Ascending aorta (tissue), 2 donors: ENCODE measurements at regions of chr13 and their contacts with region 1.

Region 1: DNA sequence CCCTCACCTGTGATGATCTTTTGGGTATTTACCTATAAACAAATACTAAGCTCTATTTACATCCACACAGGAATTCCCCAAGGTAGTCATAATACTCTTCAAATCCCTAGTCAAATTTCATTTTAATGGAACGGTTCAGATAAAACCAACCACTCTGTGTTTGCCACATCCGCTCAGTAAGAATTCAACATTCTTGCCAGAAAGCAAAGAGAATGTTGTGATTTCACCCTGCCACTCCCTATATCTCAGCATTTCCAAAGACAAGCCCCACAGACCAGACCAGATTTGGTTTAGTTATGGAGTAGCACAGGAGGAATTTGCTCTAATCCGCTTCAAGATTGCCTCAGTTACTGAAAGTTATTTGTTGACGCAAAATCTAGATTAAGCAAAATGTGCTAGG is 105.7 kb upstream of the SERP2 start:
- DNase-seq: no peak
- H3K4me3 ChIP-seq: no peak overlapping the region
- H3K27ac ChIP-seq: peak overlapping the region; percentile 88 to 92
- H3K4me1 ChIP-seq: peaks cover 9 to 42% of the 10 kb centered on the region in 2 donors
- H3K27me3 ChIP-seq: no peaks in the 10 kb centered on the region
- CTCF ChIP-seq: no peak

Region 2: DNA sequence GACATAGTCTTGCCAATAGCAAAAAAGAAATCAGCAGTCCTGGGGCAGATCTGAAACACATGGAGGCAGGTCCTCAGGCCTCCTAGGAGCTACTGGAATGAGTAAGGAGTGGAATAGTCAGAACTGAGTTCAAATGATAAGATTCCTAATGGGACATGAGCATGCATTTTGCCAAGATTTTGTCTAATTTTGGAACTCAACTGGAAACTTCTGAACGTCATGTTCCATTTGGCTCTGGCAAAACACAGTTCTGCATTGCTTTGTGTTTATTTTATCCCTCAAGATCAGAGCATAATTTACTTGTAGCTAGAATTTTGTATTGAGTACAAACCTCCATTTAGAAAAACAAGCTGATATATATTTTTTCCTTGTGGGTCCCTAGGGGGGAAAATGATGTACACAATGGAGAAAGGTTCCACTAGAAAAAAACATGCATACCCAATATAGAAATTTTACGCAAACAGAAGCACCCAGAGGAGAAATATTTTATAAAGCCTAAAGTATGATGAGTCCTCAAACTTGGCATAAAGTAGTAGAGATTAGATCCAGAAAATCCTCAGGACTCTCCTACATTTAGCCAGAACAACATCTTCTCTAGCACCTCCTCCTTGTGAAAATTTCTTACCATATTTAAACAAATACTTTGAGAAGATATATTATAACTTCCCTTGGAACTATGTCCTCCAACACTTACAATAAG is 43.4 kb before region 1 on chr13:
- intact Hi-C with region 1: loop called (anchors 1 kb)
- DNase-seq: peak in 1 of 2 donors; percentile 87
- H3K4me3 ChIP-seq: no peak overlapping the region
- H3K27ac ChIP-seq: peak overlapping the region; percentile 85 to 93
- H3K4me1 ChIP-seq: peaks cover 9 to 38% of the 10 kb centered on the region in 2 donors
- H3K27me3 ChIP-seq: no peaks in the 10 kb centered on the region
- CTCF ChIP-seq: no peak

Region 3: DNA sequence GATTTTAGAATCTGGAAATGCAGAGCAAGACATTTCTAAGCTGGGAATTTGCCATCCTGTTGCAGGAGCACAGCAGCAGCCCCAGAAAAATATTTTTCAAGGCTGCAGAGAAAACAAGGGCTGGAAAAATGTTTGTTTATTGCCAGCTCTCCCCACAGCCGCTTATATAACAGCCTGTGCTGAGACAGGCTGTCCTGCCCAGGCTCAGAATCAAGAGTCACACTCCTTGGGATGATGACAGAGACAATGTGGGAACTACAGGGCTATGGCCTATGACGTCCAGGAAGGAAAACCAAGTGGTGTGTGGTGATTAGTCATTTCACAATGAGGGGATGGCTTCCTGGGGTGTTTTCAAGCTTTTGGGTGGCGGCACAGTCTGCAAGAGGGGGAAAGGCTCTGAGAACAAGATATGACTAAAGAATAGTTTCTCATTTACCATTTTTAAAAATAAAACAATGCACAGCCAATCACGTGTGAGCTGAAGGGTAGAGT is 30.6 kb before region 1 on chr13:
- intact Hi-C with region 1: loop called (anchors 2 kb)
- DNase-seq: peak; percentile 64 to 92
- H3K4me3 ChIP-seq: no peak overlapping the region
- H3K27ac ChIP-seq: peak overlapping the region; percentile 86 to 92
- H3K4me1 ChIP-seq: peaks cover 9 to 19% of the 10 kb centered on the region in 2 donors
- H3K27me3 ChIP-seq: no peaks in the 10 kb centered on the region
- CTCF ChIP-seq: no peak

Region 4: DNA sequence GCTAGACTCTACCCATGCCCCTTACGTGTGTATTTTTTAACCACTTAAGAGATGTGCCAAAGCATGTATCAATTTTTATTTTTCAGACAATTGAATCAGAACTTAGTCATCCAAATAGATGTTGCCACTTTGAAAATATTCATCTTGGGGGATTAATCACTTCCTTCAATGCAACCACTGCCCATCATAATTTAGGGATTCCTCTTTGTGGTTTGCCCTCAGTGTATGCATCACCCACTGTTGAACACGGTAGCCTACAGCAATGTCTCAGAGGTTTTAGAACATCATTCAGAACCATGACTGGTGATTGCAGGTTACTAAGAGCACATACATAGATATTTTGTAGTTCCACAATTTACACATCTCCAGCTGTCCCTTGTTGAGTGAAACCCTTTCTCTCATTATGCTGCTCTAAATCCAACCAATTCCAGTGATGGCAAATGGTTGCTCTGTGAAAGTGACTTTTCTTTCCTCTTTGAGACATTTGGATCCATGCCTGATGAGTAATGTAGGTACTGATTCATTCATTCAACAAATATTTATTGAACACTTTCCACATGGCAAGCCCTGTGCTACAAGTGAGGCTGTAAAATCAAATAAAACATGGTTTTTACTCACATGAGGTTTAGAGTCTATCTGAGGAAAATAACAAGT is 45.1 kb after region 1 on chr13:
- intact Hi-C with region 1: no loop called
- DNase-seq: peak in 1 of 2 donors; percentile 52
- H3K4me3 ChIP-seq: no peak overlapping the region
- H3K27ac ChIP-seq: peak overlapping the region; percentile 44 to 64
- H3K4me1 ChIP-seq: peaks cover 0 to 19% of the 10 kb centered on the region in 2 donors
- H3K27me3 ChIP-seq: no peaks in the 10 kb centered on the region
- CTCF ChIP-seq: no peak